ENCODE measurements at regions of chr2 and their contacts with region 1.

Region 1: DNA sequence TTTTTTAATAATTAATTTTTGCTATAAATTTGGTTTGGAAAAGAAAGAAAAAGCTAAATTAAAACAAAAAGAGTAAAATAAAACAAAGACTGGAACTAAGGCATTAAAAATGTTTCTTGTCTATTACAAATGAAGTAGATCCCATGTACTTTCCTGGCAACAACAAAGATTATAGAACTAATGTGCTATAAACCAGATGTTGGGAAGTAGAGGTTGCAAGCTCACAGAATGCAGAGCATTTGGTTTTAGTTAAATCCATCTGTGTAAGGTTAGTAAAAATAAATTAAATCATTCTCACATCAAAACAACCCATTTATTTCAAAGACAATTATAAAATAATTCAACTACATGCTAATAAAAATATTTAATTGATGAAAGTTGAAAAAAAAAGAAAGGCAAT is 157.2 kb upstream of the ZC3H15 start:
- DNase-seq: no peak
- ATAC-seq: no peak
- H3K4me3 ChIP-seq: no peak overlapping the region
- H3K27ac ChIP-seq: no peak overlapping the region
- H3K4me1 ChIP-seq: 0 out of 2 replicates have a peak, but pooled peaks cover 3% of the 10 kb centered on the region
- H3K27me3 ChIP-seq: no peaks in the 10 kb centered on the region
- CTCF ChIP-seq: no peak
- EP300 ChIP-seq: no peak
- POLR2A ChIP-seq: no peak
- RAD21 ChIP-seq: no peak

Region 2: GRCh38 chr2:186347472-186347871 is 18.6 kb after region 1 on chr2:
- CTCF ChIA-PET with region 1: interaction called, 3 read pairs
- POLR2A ChIA-PET with region 1: no interaction called
- RAD21 ChIA-PET with region 1: interaction called, 4 read pairs
- SMC1A ChIA-PET with region 1: interaction called, 21 read pairs
- in situ Hi-C with region 1: no loop called
- intact Hi-C with region 1: no loop called
- DNase-seq: no peak
- ATAC-seq: peak; percentile 82
- H3K4me3 ChIP-seq: no peak overlapping the region
- H3K27ac ChIP-seq: no peak overlapping the region
- H3K4me1 ChIP-seq: no peaks in the 10 kb centered on the region; the same call in 1 of the 2 replicates
- H3K27me3 ChIP-seq: no peaks in the 10 kb centered on the region
- CTCF ChIP-seq: no peak
- EP300 ChIP-seq: no peak
- POLR2A ChIP-seq: no peak
- RAD21 ChIP-seq: no peak

Region 3: GRCh38 chr2:186365406-186365805 is 36.6 kb after region 1 on chr2:
- CTCF ChIA-PET with region 1: no interaction called
- POLR2A ChIA-PET with region 1: no interaction called
- RAD21 ChIA-PET with region 1: no interaction called
- SMC1A ChIA-PET with region 1: no interaction called
- in situ Hi-C with region 1: no loop called
- intact Hi-C with region 1: no loop called
- DNase-seq: no peak
- ATAC-seq: no peak
- H3K4me3 ChIP-seq: no peak overlapping the region
- H3K27ac ChIP-seq: no peak overlapping the region
- H3K4me1 ChIP-seq: no peaks in the 10 kb centered on the region
- H3K27me3 ChIP-seq: no peaks in the 10 kb centered on the region
- CTCF ChIP-seq: no peak
- EP300 ChIP-seq: no peak
- POLR2A ChIP-seq: no peak
- RAD21 ChIP-seq: no peak

Region 4: DNA sequence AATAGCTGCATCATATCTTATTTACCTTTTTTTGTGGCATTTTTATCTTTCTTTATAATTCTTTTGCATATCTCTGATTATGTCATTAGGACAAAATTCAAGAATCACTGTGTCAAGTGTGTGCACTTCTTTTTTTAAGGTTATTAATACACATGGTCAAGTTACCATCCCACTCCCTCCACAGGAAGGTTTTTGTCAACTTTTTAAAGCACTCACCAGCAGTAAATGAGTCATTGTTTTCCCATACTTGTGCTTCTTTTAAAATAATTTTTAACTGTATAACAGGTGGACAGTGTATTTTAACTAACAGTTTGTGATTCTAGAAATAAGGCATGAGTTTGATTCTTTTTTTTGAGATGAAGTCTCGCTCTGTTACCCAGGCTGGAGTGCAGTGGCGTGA is 319.3 kb after region 1 on chr2:
- CTCF ChIA-PET with region 1: no interaction called
- POLR2A ChIA-PET with region 1: no interaction called
- RAD21 ChIA-PET with region 1: no interaction called
- SMC1A ChIA-PET with region 1: no interaction called
- in situ Hi-C with region 1: no loop called
- intact Hi-C with region 1: no loop called
- DNase-seq: no peak
- ATAC-seq: no peak
- H3K4me3 ChIP-seq: no peak overlapping the region
- H3K27ac ChIP-seq: no peak overlapping the region
- H3K4me1 ChIP-seq: no peaks in the 10 kb centered on the region
- H3K27me3 ChIP-seq: no peaks in the 10 kb centered on the region
- CTCF ChIP-seq: no peak
- EP300 ChIP-seq: no peak
- POLR2A ChIP-seq: no peak
- RAD21 ChIP-seq: no peak